Brain microvascular endothelial cell (primary cell): ENCODE measurements at regions of chr2 and their contacts with region 1.

Region 1: GRCh38 chr2:215920244-215921100 is 92.9 kb downstream of the MREG start:
- DNase-seq: peak; percentile 88
- H3K4me3 ChIP-seq: no peak overlapping the region
- H3K27ac ChIP-seq: peak overlapping the region; percentile 80
- H3K27me3 ChIP-seq: no peaks in the 10 kb centered on the region
- CTCF ChIP-seq: peak; percentile 91

Region 2: GRCh38 chr2:215435809-215436704 is 484.4 kb before region 1 on chr2 and contains the start of gene FN1:
- in situ Hi-C with region 1: loop called (anchors 25 kb)
- DNase-seq: peak; percentile 99
- H3K4me3 ChIP-seq: peak within 1 kb of the TSS; percentile 96
- H3K27ac ChIP-seq: peak within 1 kb of the TSS; percentile 100
- H3K27me3 ChIP-seq: no peaks in the 10 kb centered on the region
- CTCF ChIP-seq: no peak

Region 3: DNA sequence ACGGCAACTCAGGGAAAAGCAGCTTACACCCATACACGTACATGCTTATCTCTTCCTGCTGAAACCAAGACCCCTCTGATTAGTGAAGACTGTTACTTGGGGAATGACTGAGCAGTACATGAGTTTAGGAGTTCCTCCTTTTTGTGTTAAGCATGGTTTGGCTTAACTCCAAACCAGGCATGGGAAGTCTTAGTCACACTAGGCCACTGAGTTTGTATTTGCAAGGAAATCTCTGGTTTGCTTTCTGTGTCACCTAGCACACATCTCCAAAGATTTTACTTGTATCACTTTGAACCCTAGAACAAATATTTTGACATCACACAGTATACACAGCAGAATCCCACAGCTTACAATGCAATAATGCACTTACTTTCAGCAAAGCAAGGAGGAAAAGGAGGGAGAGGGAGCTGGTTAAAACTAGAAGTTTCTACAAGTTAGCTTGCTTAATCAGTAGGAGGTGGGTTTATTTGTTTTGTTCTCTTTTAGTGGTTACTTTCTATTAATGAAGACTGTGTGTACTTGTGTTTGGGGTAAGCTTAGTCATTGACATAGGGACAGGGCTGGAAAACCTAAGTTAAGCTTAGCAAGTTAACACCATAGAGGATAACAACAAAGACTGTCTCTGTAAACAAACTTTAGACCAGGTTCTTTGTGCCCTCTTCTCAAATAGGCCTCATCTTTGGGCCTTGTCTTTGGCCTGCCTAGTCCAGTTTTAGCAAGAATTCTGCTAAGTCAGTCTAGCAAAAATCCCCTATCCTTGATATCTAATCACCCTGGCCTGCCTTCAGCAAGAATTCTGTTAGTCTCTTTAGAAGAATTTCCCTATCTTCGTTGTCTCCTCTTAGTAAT is 126.5 kb before region 1 on chr2:
- in situ Hi-C with region 1: loop called (anchors 25 kb)
- DNase-seq: peak; percentile 97
- H3K4me3 ChIP-seq: no peak overlapping the region
- H3K27ac ChIP-seq: peak overlapping the region; percentile 94
- H3K27me3 ChIP-seq: no peaks in the 10 kb centered on the region
- CTCF ChIP-seq: no peak

Region 4: GRCh38 chr2:216108310-216108966 is 188.0 kb after region 1 on chr2:
- in situ Hi-C with region 1: no loop called
- DNase-seq: no peak
- H3K4me3 ChIP-seq: peak overlapping the region; percentile 49
- H3K27ac ChIP-seq: peak overlapping the region; percentile 47
- H3K27me3 ChIP-seq: no peaks in the 10 kb centered on the region
- CTCF ChIP-seq: no peak